Endothelial cell of umbilical vein (primary cell): ENCODE measurements at regions of chr10 and their contacts with region 1.

Region 1: DNA sequence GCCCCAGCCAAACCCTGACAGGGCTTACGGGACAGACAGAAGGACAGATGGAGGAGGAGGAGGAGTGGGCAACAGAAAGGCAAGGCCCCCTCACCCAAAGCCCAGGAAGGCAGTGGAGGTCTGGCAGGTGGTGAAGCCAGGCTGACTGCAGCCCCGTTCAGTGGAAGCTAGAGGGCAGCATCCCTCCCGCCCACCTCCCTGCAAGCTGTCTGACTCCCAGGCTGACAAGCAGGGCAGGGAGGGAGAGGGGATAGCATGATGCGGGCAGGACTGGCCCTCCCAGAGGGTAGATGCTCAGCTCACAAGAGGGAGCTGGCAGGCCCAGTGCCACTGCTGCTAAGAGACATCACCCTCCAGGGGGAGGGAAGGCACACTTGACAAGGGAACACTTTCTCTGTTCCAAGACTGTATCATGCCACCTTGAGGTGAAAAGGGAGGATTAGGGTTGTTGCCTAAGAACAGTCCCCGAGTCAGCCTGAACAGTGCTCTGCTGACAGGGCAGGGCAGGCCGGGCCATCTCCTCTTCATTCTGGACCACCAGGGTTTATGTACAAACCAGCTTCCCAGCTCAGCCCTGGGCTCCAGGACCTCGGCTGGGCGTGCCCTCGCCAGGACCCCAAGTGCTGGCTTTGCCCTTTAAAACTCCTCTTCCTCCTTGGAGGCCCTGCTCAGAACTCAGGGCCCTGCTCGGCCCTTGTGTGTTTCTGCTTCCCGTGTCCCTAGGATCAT is 61.8 kb downstream of the RASGEF1A start:
- DNase-seq: peak; percentile 50
- H3K4me3 ChIP-seq: no peak overlapping the region
- H3K27ac ChIP-seq: no peak overlapping the region
- H3K4me1 ChIP-seq: no peaks in the 10 kb centered on the region
- H3K27me3 ChIP-seq: no peaks in the 10 kb centered on the region
- CTCF ChIP-seq: peak; percentile 65 to 93
- POLR2A ChIP-seq: no peak

Region 2: DNA sequence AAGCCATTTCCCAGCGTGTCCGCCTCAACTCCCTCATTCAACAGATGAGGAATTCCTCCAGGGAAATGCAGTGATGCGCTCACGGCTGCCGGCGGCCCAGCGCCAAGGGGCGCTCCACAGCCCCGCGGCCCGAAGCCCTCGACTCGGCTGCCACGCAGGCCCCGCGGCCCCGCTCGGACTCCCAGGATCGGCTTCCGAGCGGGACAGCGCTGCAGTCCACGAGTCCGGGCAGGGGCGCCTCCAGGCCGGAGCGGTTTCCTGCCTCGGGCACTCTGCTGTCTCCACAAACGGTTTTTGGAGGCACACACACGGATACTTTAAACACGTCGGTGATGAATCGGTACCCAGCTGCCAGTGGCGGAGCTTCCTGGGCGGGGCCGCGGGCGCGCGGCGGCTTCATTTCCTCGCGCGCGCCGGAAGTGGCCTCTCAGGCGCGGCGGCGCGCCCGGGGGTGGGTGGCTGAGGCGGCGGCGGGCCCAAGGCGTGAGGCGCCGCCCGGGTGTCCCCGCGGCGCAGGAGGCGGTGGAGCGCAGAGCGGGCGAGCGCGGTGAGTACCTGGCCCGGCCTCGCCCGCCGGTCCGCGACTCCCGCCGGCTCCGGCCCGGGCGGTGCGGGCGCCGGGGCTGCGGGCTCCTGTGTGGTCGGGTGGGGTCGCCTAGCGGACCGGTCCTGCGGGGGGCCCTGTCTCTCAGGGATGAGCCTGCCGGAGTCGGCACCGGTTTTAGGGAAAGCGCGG is 66.9 kb before region 1 on chr10 and contains the start of gene CSGALNACT2:
- CTCF ChIA-PET with region 1: interaction called, 12 read pairs
- POLR2A ChIA-PET with region 1: no interaction called
- dilution Hi-C with region 1: no loop called
- intact Hi-C with region 1: loop called (anchors 2 kb)
- DNase-seq: peak; percentile 76
- H3K4me3 ChIP-seq: peak within 1 kb of the TSS; percentile 75 to 98 (median 92)
- H3K27ac ChIP-seq: peak within 1 kb of the TSS; percentile 81
- H3K4me1 ChIP-seq: peaks cover 24% of the 10 kb centered on the region
- H3K27me3 ChIP-seq: peaks cover 2 to 6% of the 10 kb centered on the region in 2 experiments
- CTCF ChIP-seq: no peak
- POLR2A ChIP-seq: peak; percentile 80
- total RNA-seq, gene CSGALNACT2: 17.7 and 19.9 TPM in 2 replicates

Region 3: GRCh38 chr10:43193496-43194080 is 11.5 kb before region 1 on chr10:
- CTCF ChIA-PET with region 1: interaction called, 13 read pairs
- POLR2A ChIA-PET with region 1: no interaction called
- dilution Hi-C with region 1: no loop called
- intact Hi-C with region 1: no loop called
- DNase-seq: no peak
- H3K4me3 ChIP-seq: no peak overlapping the region
- H3K27ac ChIP-seq: no peak overlapping the region
- H3K4me1 ChIP-seq: no peaks in the 10 kb centered on the region
- H3K27me3 ChIP-seq: no peaks in the 10 kb centered on the region
- CTCF ChIP-seq: no peak
- POLR2A ChIP-seq: no peak

Region 4: DNA sequence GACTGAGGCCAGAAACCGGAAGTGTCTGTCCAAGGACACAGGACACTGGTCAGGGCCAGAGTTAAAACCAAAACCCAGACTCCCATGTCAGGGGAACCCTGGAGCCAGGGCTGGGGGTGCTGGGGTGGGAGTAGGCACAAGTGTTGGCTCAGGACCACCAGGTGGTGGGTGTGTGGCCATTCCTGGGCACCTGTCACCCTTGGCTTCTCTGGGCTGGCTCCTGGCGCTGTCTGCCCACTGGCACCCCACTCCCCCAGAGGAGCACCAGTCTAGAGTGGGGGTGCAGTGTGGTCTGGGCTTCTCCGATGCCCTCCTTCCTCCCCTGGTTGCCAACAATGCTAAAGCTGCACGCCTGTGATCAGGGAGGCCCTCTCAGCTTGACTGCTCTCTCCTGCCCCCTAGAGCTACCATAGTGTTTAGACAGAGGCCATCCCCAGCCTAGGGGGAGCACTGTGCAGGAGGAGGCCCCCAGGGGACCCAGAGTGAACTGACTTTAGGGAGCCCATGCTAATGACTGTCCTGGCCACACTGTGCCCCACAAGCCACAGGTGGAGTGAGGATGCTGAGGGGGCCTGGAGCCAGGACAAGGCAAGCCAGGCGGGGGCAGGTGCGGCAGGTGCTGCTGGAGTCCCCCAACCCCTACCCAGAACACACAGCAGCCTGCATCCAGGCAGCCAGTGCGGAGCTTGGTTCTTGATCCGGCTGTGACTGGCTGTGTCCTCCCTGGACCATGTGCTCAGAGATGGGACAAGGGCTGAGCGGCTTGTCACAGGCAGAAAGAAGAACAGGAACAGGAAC is 50.7 kb after region 1 on chr10:
- CTCF ChIA-PET with region 1: interaction called, 5 read pairs
- POLR2A ChIA-PET with region 1: no interaction called
- dilution Hi-C with region 1: no loop called
- intact Hi-C with region 1: loop called (anchors 5 kb)
- DNase-seq: peak; percentile 8
- H3K4me3 ChIP-seq: no peak overlapping the region
- H3K27ac ChIP-seq: no peak overlapping the region
- H3K4me1 ChIP-seq: no peaks in the 10 kb centered on the region
- H3K27me3 ChIP-seq: no peaks in the 10 kb centered on the region
- CTCF ChIP-seq: peak; percentile 29 to 45
- POLR2A ChIP-seq: no peak

Region 5: DNA sequence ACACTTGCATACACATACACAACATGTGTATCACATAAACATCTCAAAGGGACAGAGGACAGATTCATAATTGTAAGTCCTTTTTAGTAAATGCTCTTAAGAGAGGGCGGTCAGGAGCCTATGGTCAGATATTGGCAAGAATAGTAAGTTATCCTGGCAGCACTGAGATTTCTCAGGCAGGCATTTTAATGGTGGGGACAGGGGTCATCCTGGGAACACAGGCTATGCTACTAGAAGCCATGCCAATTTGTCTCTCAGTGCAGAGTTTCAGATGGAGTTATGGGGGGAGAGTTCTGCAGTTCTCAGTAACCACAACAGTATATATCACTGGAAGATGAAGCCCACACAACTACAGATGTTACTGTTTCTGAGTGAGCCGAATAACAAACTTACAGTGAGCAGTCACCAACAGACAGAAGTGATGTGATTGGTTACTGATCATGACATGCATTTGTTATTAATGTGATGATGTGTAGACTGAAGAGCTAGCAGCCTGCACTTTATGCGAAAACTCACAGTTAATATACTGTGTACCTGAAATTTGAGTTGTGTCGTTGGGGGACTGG is 248.2 kb after region 1 on chr10:
- CTCF ChIA-PET with region 1: interaction called, 4 read pairs
- POLR2A ChIA-PET with region 1: no interaction called
- dilution Hi-C with region 1: no loop called
- intact Hi-C with region 1: loop called (anchors 1 kb)
- DNase-seq: no peak
- H3K4me3 ChIP-seq: no peak overlapping the region
- H3K27ac ChIP-seq: no peak overlapping the region
- H3K4me1 ChIP-seq: peaks cover 12% of the 10 kb centered on the region
- H3K27me3 ChIP-seq: no peaks in the 10 kb centered on the region
- CTCF ChIP-seq: no peak
- POLR2A ChIP-seq: no peak

Region 6: GRCh38 chr10:44020322-44021111 is 815.4 kb after region 1 on chr10:
- CTCF ChIA-PET with region 1: no interaction called
- POLR2A ChIA-PET with region 1: no interaction called
- dilution Hi-C with region 1: no loop called
- intact Hi-C with region 1: no loop called
- DNase-seq: no peak
- H3K4me3 ChIP-seq: no peak overlapping the region
- H3K27ac ChIP-seq: no peak overlapping the region
- H3K4me1 ChIP-seq: no peaks in the 10 kb centered on the region
- H3K27me3 ChIP-seq: no peaks in the 10 kb centered on the region
- CTCF ChIP-seq: no peak
- POLR2A ChIP-seq: no peak